ENCODE measurements at regions of chr11 and their contacts with region 1.

Region 1: DNA sequence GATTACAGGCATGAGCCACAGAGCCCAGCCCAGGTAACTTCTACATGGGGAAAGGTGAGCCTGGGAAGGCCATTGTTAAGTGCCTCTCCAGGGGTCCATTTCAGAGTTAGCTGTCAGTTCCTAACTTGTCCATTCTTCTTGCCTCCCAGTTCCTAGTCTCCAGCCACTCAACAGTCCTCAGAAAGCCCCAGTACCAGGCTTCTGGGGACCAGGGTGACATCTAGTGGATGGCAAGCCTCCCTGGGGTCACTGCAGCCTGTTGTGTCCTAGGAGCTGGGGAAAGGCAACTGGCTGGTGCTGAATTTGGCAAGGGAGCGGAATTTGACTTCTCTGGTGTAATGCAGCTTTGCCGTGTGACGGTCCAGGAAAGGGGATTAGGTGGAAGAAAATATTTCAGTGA is 2.1 kb downstream of the LGALS12 start:
- DNase-seq: peak; percentile 59 to 68 (median 65)
- H3K4me3 ChIP-seq: peak overlapping the region in 1 of 3 experiments; percentile 79
- H3K4me3 Mint-ChIP-seq: peak overlapping the region in 1 of 2 donors; percentile 93
- H3K27ac ChIP-seq: no peak overlapping the region
- H3K27ac Mint-ChIP-seq: peak overlapping the region; percentile 15 to 90 (median 83)
- H3K4me1 ChIP-seq: peaks cover 60 to 61% of the 10 kb centered on the region in 2 donors
- H3K4me1 Mint-ChIP-seq: peaks cover 58% of the 10 kb centered on the region
- H3K27me3 ChIP-seq: no peaks in the 10 kb centered on the region
- H3K27me3 Mint-ChIP-seq: peaks cover 0 to 2% (median 0%) of the 10 kb centered on the region in 3 donors
- CTCF ChIP-seq: peak; percentile 45

Region 2: GRCh38 chr11:63567044-63567840 is 59.2 kb after region 1 on chr11:
- intact Hi-C with region 1: loop called in 1 of 2 experiments (anchors 5 kb)
- DNase-seq: peak; percentile 95 to 97 (median 96)
- H3K4me3 ChIP-seq: peak overlapping the region in 1 of 3 experiments; percentile 43
- H3K4me3 Mint-ChIP-seq: peak overlapping the region in 1 of 2 donors; percentile 85
- H3K27ac ChIP-seq: peak overlapping the region; percentile 5 to 94
- H3K27ac Mint-ChIP-seq: peak overlapping the region; percentile 97 to 99 (median 98)
- H3K4me1 ChIP-seq: peaks cover 23 to 25% of the 10 kb centered on the region in 2 donors
- H3K4me1 Mint-ChIP-seq: peaks cover 30% of the 10 kb centered on the region
- H3K27me3 ChIP-seq: no peaks in the 10 kb centered on the region
- H3K27me3 Mint-ChIP-seq: peaks cover 0 to 3% (median 0%) of the 10 kb centered on the region in 3 donors
- CTCF ChIP-seq: no peak